ENCODE measurements at regions of chr10 and their contacts with region 1.

Region 1: GRCh38 chr10:51001587-51001986 is 72.7 kb upstream of the PRKG1 start:
- DNase-seq: no peak
- ATAC-seq: no peak
- H3K4me3 Mint-ChIP-seq: no peak overlapping the region
- H3K27ac Mint-ChIP-seq: no peak overlapping the region
- H3K4me1 Mint-ChIP-seq: no peaks in the 10 kb centered on the region
- H3K27me3 Mint-ChIP-seq: peaks cover 3% of the 10 kb centered on the region
- CTCF ChIP-seq: no peak

Region 2: DNA sequence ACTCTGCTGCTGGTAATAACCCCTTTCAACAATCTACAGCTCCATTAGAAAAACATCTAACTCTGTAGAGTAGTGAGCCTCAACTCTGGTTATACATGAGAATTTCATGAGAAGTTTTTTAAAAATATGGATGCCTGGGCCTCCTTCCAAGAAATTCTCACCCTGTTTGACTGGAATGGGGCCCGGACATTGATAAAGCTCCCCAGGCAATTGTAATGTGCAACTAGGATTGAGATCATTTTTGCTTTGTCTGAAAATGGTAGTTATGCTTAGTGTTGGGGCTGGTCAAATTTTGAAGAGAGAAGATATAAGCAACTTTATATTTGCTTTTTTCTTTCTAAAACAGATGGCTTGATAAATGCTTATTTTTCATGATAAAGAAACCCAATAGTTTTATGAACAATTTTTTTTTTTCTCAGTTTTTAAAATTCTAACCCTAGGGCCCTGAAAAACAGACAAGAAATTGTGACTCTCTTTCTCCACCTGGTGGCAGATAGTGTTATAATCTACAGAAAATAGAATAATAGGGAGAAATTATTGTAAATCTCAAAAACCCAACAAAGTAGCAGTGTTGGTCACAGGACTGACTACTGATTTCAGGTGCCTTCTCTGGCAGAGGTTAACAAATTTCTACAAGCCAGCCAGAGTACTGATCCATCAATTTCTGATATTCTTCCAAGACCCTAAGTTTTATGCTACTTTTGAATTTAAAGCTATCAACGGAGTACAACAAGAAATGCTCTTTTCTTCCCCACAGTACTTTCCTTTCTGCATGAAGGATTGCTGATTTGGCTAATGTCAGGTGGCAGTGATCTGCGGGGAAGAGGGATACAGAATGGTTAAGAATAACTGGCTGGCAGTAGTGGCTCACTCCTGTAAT is 1487.3 kb after region 1 on chr10:
- CTCF ChIA-PET with region 1: no interaction called
- POLR2A ChIA-PET with region 1: no interaction called
- intact Hi-C with region 1: loop called (anchors 1 kb)
- DNase-seq: no peak
- ATAC-seq: no peak
- H3K4me3 Mint-ChIP-seq: no peak overlapping the region
- H3K27ac Mint-ChIP-seq: no peak overlapping the region
- H3K4me1 Mint-ChIP-seq: peaks cover 1% of the 10 kb centered on the region
- H3K27me3 Mint-ChIP-seq: no peaks in the 10 kb centered on the region
- CTCF ChIP-seq: no peak